ENCODE measurements at regions of chr6 and their contacts with region 1.

Region 1: GRCh38 chr6:24391756-24392405 is 10.9 kb upstream of the MRS2 start:
- DNase-seq: no peak
- H3K4me3 ChIP-seq: no peak overlapping the region
- H3K27ac ChIP-seq: no peak overlapping the region
- H3K4me1 ChIP-seq: peaks cover 12% of the 10 kb centered on the region
- H3K27me3 ChIP-seq: no peaks in the 10 kb centered on the region
- CTCF ChIP-seq: no peak

Region 2: DNA sequence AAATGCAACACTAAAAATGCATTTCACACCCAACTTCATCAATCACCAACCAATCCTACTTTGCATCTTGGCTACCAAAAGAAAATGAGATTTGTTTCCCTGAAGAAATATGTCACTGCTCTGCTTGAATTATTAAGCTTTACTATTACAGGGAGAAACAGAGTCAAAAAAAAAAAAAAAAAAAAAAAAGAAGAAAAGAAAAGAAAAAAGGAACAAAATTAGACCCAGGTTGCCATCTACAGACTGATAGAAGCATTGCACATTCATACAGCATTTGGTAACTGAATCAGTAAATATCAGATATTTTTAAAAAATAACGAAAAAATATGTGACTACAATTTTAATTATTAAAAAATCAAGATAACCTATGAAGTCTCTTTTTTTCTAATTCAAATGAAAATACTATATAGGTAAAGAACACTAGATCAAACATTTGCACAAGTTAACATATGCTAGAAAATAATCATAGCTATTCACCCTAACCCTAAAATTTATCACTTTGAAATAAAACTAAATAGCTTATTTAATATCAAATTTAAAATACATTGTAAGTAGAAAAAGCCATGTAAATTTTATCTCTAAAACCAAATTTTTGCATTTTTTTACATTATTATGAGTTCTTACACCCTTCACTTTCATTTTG is 117.3 kb before region 1 on chr6:
- CTCF ChIA-PET with region 1: interaction called, 10 read pairs
- POLR2A ChIA-PET with region 1: no interaction called
- intact Hi-C with region 1: no loop called
- DNase-seq: no peak
- H3K4me3 ChIP-seq: no peak overlapping the region
- H3K27ac ChIP-seq: no peak overlapping the region
- H3K4me1 ChIP-seq: no peaks in the 10 kb centered on the region
- H3K27me3 ChIP-seq: no peaks in the 10 kb centered on the region
- CTCF ChIP-seq: peak; percentile 70